Activated B cell treated with CpG ODN at 0.5 μM for 24 hours (primary cell): ENCODE measurements at regions of chr4 and their contacts with region 1.

Region 1: DNA sequence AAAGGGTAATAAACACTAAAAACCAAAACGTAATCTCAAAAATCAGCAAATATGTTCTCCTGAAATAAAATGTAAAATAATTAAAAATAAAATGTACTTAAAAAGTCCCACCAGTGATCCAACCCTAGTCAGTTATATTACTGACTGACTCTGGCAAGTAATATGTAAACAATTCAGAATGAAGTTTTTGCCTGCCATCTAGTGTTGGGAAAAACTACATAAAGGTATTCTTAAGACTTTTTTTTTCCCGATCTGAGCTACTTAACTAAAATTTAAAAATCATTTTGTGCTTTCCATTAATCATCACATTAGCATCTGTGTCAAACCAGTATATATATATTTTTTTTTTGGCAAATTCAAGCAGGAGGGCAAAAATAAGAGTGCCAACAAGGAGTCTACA is 24.0 kb downstream of the RCHY1 start:
- DNase-seq: no peak
- ATAC-seq: no peak
- H3K4me3 Mint-ChIP-seq: no peak overlapping the region
- H3K27ac Mint-ChIP-seq: no peak overlapping the region
- H3K4me1 Mint-ChIP-seq: no peaks in the 10 kb centered on the region
- H3K27me3 Mint-ChIP-seq: no peaks in the 10 kb centered on the region
- CTCF ChIP-seq: no peak

Region 2: DNA sequence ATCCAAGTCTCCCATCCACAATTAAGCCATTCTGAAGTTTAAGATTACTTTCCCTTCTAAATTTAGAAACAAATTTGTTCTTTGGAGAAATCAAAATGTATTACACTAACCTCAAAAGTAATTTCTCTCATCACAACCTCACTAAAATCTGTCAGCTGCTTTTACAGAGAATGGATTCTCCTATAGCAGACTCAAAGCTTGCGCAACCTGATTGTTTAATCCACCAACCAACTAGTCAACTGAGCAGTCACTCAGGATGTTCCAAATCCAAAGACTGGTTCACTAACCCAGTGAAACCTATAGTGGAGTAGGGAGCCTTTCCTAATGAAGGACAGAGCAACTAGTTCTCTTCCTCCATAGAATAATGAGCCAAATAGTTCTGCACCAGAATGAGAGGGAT is 20.3 kb before region 1 on chr4:
- CTCF ChIA-PET with region 1: no interaction called
- POLR2A ChIA-PET with region 1: no interaction called
- intact Hi-C with region 1: no loop called
- DNase-seq: no peak
- ATAC-seq: no peak
- H3K4me3 Mint-ChIP-seq: no peak overlapping the region
- H3K27ac Mint-ChIP-seq: no peak overlapping the region
- H3K4me1 Mint-ChIP-seq: no peaks in the 10 kb centered on the region
- H3K27me3 Mint-ChIP-seq: no peaks in the 10 kb centered on the region
- CTCF ChIP-seq: no peak

Region 3: DNA sequence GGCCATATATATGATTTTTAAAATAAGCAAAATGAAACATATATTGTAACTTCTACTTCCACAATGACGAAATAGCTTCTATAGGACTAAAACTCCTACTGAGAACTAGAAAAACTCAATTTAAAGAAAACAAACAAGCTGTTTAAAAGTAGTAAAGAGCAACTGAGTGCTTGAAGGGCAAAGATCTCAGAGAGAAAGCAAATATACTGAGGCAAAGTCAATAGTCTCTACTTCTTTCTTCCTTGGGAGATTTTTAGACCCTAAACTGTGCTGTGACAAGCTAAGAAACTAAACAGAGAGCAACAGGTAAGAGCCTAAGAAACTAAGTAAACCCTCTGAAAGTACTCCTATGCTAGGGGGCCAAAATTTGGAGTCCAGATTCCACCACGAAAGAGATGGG is 15.5 kb after region 1 on chr4:
- CTCF ChIA-PET with region 1: no interaction called
- POLR2A ChIA-PET with region 1: no interaction called
- intact Hi-C with region 1: loop called (anchors 2 kb)
- DNase-seq: no peak
- ATAC-seq: no peak
- H3K4me3 Mint-ChIP-seq: no peak overlapping the region
- H3K27ac Mint-ChIP-seq: no peak overlapping the region
- H3K4me1 Mint-ChIP-seq: peaks cover 11% of the 10 kb centered on the region
- H3K27me3 Mint-ChIP-seq: no peaks in the 10 kb centered on the region
- CTCF ChIP-seq: no peak

Region 4: DNA sequence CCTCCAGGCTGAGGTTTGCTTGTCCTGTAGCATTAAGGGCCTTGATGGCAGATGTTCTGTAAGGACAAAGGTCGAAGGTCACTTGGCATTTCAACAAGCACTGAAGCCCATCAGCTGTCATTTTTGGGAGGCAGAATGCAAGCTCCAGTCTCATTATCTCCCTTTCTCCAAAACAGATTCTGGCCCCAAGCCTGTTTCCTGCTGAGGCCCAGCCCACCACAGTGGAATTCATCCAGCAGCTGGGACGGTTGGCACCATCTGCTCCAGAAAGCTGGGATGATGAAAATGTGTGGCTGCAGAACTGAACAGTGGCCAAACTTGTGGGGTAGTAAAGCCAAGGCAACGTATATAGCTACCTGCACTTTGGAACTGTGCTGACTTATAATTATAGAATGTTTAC is 429.8 kb after region 1 on chr4:
- CTCF ChIA-PET with region 1: no interaction called
- POLR2A ChIA-PET with region 1: no interaction called
- intact Hi-C with region 1: no loop called
- DNase-seq: no peak
- ATAC-seq: no peak
- H3K4me3 Mint-ChIP-seq: no peak overlapping the region
- H3K27ac Mint-ChIP-seq: no peak overlapping the region
- H3K4me1 Mint-ChIP-seq: no peaks in the 10 kb centered on the region
- H3K27me3 Mint-ChIP-seq: no peaks in the 10 kb centered on the region
- CTCF ChIP-seq: no peak